ENCODE measurements at regions of chr1 and their contacts with region 1.

Region 1: DNA sequence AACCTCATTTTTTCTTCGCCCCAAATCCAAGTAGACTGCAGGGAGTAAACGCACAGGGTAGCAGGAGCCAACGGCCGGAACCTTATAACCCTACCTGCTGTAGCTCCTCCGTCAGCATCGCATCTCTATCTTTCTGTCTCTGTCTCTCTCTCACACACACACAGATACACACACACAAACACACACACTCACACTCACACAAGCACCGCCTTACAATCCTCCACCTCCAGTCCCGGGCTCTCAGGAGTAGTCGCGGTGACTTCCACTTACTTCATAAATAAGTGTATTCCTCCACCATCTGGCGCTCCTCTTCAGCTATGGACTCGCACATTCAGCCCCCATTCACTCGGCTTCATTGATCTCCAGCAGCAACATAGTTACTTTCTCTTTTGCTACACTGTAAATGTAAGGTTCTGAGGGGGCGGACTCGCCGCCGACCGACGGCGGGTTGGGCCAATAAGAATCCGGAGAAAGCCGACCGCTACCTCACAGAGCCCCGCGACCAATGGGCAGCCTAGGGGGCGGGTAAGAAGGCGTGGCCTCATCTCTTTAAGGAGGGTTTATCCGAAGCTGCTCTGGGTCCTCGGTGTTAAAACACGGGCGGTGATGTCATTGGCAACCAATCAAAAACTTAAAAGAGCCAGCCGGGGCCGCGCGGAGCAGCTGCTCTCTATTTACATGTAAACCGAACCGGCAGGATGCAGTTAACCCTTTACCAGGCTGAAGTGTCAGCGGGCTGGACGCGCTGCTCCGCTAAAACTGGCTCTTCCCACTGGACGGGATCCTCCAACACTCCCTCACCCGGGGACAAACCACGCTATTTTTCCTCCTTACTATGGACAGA is at the start of gene DUSP10:
- DNase-seq: peak; percentile 94 to 100 (median 99)
- ATAC-seq: peak; percentile 83 to 89 (median 86)
- H3K4me3 ChIP-seq: peak within 1 kb of the TSS; percentile 89 to 100
- H3K4me3 Mint-ChIP-seq: peak within 1 kb of the TSS in 1 of 3 donors; percentile 82
- H3K27ac ChIP-seq: peak within 1 kb of the TSS; percentile 99
- H3K27ac Mint-ChIP-seq: peak within 1 kb of the TSS in 1 of 2 donors; percentile 80
- H3K4me1 ChIP-seq: peaks cover 5 to 29% of the 10 kb centered on the region in 2 experiments
- H3K4me1 Mint-ChIP-seq: peaks cover 10 to 30% (median 24%) of the 10 kb centered on the region in 3 donors
- H3K27me3 ChIP-seq: no peaks in the 10 kb centered on the region
- H3K27me3 Mint-ChIP-seq: no peaks in the 10 kb centered on the region
- total RNA-seq, gene DUSP10: 5.2 to 64.2 (median 6.0) TPM

Region 2: DNA sequence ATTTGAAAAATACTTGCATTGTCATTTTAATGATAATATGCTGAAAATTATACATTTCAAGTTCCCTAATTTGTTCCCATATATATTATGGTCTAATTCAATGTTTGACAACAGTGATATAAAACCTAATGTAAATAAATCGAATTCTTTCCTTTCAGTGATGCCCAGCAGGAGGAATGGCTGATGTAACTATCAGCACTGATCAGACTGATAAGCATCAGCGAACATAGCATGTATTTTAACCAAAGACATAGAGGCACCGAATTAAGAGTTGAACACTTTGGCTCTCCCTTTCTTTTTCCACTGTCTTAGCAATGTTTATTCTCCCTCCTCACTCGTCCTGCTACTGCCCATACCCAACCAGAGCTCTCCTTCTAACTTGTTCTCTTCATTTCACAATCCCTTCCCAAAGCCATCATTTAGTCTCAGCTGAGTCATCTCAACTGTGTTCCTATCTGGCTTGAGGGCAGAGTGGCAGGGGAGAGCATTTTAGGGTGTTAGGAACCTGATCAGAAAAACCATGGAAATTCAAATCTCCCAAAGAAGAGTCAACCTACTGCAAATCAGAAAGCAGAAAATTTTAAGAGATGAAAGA is 1110.6 kb before region 1 on chr1:
- CTCF ChIA-PET with region 1: no interaction called
- POLR2A ChIA-PET with region 1: no interaction called
- DNase-seq: no peak
- ATAC-seq: no peak
- H3K4me3 ChIP-seq: no peak overlapping the region
- H3K4me3 Mint-ChIP-seq: no peak overlapping the region
- H3K27ac ChIP-seq: no peak overlapping the region
- H3K27ac Mint-ChIP-seq: no peak overlapping the region
- H3K4me1 ChIP-seq: no peaks in the 10 kb centered on the region
- H3K4me1 Mint-ChIP-seq: no peaks in the 10 kb centered on the region
- H3K27me3 ChIP-seq: no peaks in the 10 kb centered on the region
- H3K27me3 Mint-ChIP-seq: peaks cover 5 to 13% of the 10 kb centered on the region in 2 donors

Region 3: GRCh38 chr1:221174330-221174999 is 567.5 kb before region 1 on chr1:
- CTCF ChIA-PET with region 1: no interaction called
- POLR2A ChIA-PET with region 1: no interaction called
- DNase-seq: no peak
- ATAC-seq: no peak
- H3K4me3 ChIP-seq: no peak overlapping the region
- H3K4me3 Mint-ChIP-seq: no peak overlapping the region
- H3K27ac ChIP-seq: no peak overlapping the region
- H3K27ac Mint-ChIP-seq: no peak overlapping the region
- H3K4me1 ChIP-seq: no peaks in the 10 kb centered on the region
- H3K4me1 Mint-ChIP-seq: no peaks in the 10 kb centered on the region
- H3K27me3 ChIP-seq: no peaks in the 10 kb centered on the region
- H3K27me3 Mint-ChIP-seq: peaks cover 0 to 4% of the 10 kb centered on the region in 2 donors

Region 4: GRCh38 chr1:221478050-221478949 is 263.6 kb before region 1 on chr1:
- CTCF ChIA-PET with region 1: interaction called in 1 of 2 experiments, 11 read pairs
- POLR2A ChIA-PET with region 1: no interaction called
- DNase-seq: peak in 34 of 35 experiments; percentile 5 to 66 (median 35)
- ATAC-seq: peak; percentile 76 to 94 (median 86)
- H3K4me3 ChIP-seq: no peak overlapping the region
- H3K4me3 Mint-ChIP-seq: no peak overlapping the region
- H3K27ac ChIP-seq: no peak overlapping the region
- H3K27ac Mint-ChIP-seq: no peak overlapping the region
- H3K4me1 ChIP-seq: no peaks in the 10 kb centered on the region
- H3K4me1 Mint-ChIP-seq: peaks cover 0 to 4% (median 4%) of the 10 kb centered on the region in 3 donors
- H3K27me3 ChIP-seq: no peaks in the 10 kb centered on the region
- H3K27me3 Mint-ChIP-seq: peaks cover 4% of the 10 kb centered on the region in 2 donors

Region 5: DNA sequence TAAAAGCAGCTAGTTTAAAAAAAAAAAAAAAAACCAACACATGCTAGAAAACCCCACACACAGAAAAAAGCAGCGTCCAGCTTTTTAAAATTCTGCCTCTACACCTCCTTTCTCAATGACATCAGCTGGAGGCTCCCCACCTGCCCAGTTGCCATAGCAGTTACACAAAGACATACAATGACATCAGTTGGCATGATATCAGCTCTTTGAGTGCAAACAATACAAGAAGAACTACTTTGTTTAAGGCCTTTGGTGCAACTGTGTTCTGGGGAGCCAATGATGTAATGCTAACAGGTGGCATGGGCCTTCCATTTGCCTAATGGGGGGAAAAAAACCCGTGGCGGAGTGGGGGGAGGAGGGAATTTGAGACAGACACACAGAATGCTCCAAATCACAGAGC is 32.9 kb before region 1 on chr1:
- CTCF ChIA-PET with region 1: interaction called, 3 to 16 read pairs
- POLR2A ChIA-PET with region 1: interaction called, 4 to 218 read pairs
- DNase-seq: peak in 33 of 35 experiments; percentile 4 to 85 (median 56)
- ATAC-seq: peak in 1 of 4 experiments; percentile 60
- H3K4me3 ChIP-seq: no peak overlapping the region
- H3K4me3 Mint-ChIP-seq: no peak overlapping the region
- H3K27ac ChIP-seq: peak overlapping the region; percentile 77
- H3K27ac Mint-ChIP-seq: peak overlapping the region; percentile 71 to 80
- H3K4me1 ChIP-seq: peaks cover 30 to 37% of the 10 kb centered on the region in 2 experiments
- H3K4me1 Mint-ChIP-seq: peaks cover 54 to 74% (median 71%) of the 10 kb centered on the region in 3 donors
- H3K27me3 ChIP-seq: no peaks in the 10 kb centered on the region
- H3K27me3 Mint-ChIP-seq: no peaks in the 10 kb centered on the region

Region 6: DNA sequence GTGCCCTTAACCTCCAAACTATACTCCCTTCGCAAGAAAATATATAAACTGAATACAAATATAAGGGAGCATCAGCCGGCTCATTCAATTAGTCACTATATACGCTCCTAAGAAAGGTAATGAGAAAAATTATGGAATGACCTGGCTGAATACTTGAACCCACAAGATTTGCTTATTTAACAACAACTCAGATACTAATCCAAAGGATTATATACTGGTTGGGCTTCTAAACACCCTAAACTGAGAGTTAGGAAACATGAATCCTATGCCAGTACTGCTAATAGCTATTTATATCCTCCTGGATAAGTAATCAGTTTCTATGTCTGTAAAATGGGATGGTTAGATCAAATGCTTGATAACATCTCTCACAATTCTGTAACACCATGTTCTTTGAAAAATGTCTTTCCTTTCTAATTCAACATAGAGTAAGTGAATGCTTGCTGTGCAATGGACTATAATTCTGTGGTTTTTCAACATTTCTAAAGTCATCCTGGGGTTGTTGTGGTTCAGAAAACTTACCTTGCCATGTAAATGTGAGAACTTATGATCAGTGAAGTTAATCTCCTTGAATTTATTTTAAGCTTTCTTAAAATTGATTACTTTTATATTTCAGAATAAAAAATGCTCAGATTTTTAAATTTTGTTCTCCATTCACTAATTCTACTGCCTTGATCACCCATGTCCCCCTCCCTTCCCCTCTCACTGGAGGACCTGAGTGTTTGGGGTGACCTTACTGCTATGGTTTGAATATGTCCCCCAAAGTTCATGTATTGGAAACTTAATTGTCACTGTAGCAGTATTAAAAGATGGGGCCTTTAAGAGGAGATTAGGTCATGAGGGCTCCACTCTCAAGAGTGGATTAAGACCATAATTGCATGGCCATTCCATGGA is 14.5 kb before region 1 on chr1:
- CTCF ChIA-PET with region 1: interaction called, 3 to 12 read pairs
- POLR2A ChIA-PET with region 1: interaction called, 5 to 24 read pairs
- DNase-seq: no peak
- ATAC-seq: peak in 1 of 4 experiments; percentile 33
- H3K4me3 ChIP-seq: no peak overlapping the region
- H3K4me3 Mint-ChIP-seq: peak overlapping the region in 2 of 3 donors; percentile 21 to 50
- H3K27ac ChIP-seq: peak overlapping the region; percentile 41
- H3K27ac Mint-ChIP-seq: peak overlapping the region; percentile 53 to 82
- H3K4me1 ChIP-seq: peaks cover 24 to 33% of the 10 kb centered on the region in 2 experiments
- H3K4me1 Mint-ChIP-seq: peaks cover 49 to 75% (median 71%) of the 10 kb centered on the region in 3 donors
- H3K27me3 ChIP-seq: no peaks in the 10 kb centered on the region
- H3K27me3 Mint-ChIP-seq: no peaks in the 10 kb centered on the region

Region 7: DNA sequence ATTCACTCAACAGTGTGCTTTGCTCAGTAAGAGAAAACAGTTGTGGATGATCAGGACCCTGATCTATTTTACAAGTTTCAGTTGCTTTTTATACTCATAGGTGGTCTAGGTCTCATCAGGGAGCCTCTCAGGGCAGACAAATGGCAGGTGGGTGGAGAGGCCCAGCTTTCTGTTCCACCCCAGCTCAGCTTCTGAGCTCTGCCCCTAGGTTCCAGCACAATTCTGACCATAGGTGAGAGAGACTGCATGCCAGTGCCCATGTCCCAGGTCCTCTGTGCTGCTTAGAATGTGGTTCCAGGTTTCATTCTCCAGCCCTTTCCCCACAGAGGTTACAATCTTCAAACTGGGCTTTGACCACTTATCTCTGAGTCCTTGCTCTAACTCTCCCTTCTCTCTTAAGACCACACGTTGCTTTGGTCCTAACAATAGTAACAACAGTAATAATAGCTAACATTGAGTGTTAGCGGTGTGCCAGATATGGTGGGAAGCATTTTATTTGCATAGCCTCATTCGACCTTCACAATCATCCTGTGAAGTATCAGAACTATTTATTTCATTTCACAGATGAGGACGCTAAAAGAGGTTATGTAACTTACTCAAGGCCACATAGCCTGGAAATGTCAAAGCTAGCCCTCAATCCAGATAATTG is 19.5 kb after region 1 on chr1:
- CTCF ChIA-PET with region 1: no interaction called
- POLR2A ChIA-PET with region 1: no interaction called
- DNase-seq: no peak
- ATAC-seq: no peak
- H3K4me3 ChIP-seq: no peak overlapping the region
- H3K4me3 Mint-ChIP-seq: no peak overlapping the region
- H3K27ac ChIP-seq: no peak overlapping the region
- H3K27ac Mint-ChIP-seq: no peak overlapping the region
- H3K4me1 ChIP-seq: no peaks in the 10 kb centered on the region
- H3K4me1 Mint-ChIP-seq: peaks cover 0 to 10% (median 8%) of the 10 kb centered on the region in 3 donors
- H3K27me3 ChIP-seq: no peaks in the 10 kb centered on the region
- H3K27me3 Mint-ChIP-seq: no peaks in the 10 kb centered on the region

Region 8: DNA sequence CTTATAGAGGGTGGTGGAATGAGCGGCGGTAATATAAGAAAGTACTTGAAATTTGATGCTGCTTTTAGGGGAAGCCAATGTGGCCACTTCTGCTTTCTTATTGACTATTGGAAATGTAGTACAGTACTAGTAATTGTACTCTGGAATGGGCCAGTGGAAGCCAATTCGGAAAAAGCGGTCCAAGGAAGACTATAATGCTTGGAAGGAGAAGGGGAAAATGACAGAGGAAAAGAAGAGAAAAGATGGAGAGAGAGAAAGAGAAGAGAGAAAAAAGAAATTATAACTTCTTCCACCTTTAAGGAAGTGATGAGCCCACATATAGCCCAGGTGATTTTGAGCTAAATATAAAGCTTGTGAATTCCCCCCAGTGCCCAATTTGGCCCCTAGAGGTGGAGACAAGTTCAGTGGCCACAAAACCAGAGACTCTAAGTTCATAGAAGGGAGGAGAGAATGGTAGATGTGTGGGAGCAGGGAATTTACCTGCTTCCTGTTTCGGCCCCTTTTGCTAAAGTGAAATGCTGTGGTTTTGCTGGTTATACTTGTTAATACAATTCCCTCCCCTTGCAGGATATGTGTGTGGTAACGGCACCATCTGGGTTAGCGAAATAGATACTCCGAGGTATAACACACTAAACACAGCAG is 35.6 kb after region 1 on chr1:
- CTCF ChIA-PET with region 1: interaction called in 1 of 2 experiments, 11 read pairs
- POLR2A ChIA-PET with region 1: interaction called in 1 of 2 experiments, 9 read pairs
- DNase-seq: peak in 32 of 35 experiments; percentile 8 to 85 (median 38)
- ATAC-seq: peak; percentile 60 to 82 (median 68)
- H3K4me3 ChIP-seq: peak overlapping the region in 1 of 2 donors; percentile 18
- H3K4me3 Mint-ChIP-seq: peak overlapping the region in 2 of 3 donors; percentile 37 to 60
- H3K27ac ChIP-seq: peak overlapping the region; percentile 77
- H3K27ac Mint-ChIP-seq: peak overlapping the region; percentile 81 to 90
- H3K4me1 ChIP-seq: peaks cover 41 to 49% of the 10 kb centered on the region in 2 experiments
- H3K4me1 Mint-ChIP-seq: peaks cover 50 to 68% (median 56%) of the 10 kb centered on the region in 3 donors
- H3K27me3 ChIP-seq: no peaks in the 10 kb centered on the region
- H3K27me3 Mint-ChIP-seq: no peaks in the 10 kb centered on the region

Region 9: GRCh38 chr1:221829327-221830015 is 87.5 kb after region 1 on chr1:
- CTCF ChIA-PET with region 1: interaction called in 1 of 2 experiments, 6 read pairs
- POLR2A ChIA-PET with region 1: interaction called in 1 of 2 experiments, 23 read pairs
- DNase-seq: peak in 25 of 35 experiments; percentile 5 to 70 (median 27)
- ATAC-seq: peak; percentile 72 to 91 (median 84)
- H3K4me3 ChIP-seq: no peak overlapping the region
- H3K4me3 Mint-ChIP-seq: peak overlapping the region; percentile 41 to 73 (median 56)
- H3K27ac ChIP-seq: peak overlapping the region; percentile 81
- H3K27ac Mint-ChIP-seq: peak overlapping the region; percentile 85 to 95
- H3K4me1 ChIP-seq: peaks cover 9 to 21% of the 10 kb centered on the region in 2 experiments
- H3K4me1 Mint-ChIP-seq: peaks cover 39 to 63% (median 45%) of the 10 kb centered on the region in 3 donors
- H3K27me3 ChIP-seq: no peaks in the 10 kb centered on the region
- H3K27me3 Mint-ChIP-seq: no peaks in the 10 kb centered on the region

Region 10: GRCh38 chr1:221939607-221940006 is 197.7 kb after region 1 on chr1:
- CTCF ChIA-PET with region 1: no interaction called
- POLR2A ChIA-PET with region 1: no interaction called
- DNase-seq: peak in 2 of 35 experiments; percentile 1 to 17
- ATAC-seq: no peak
- H3K4me3 ChIP-seq: no peak overlapping the region
- H3K4me3 Mint-ChIP-seq: no peak overlapping the region
- H3K27ac ChIP-seq: no peak overlapping the region
- H3K27ac Mint-ChIP-seq: no peak overlapping the region
- H3K4me1 ChIP-seq: no peaks in the 10 kb centered on the region
- H3K4me1 Mint-ChIP-seq: no peaks in the 10 kb centered on the region
- H3K27me3 ChIP-seq: no peaks in the 10 kb centered on the region
- H3K27me3 Mint-ChIP-seq: no peaks in the 10 kb centered on the region